A549 (cell line): ENCODE measurements at regions of chr14 and their contacts with region 1.

Region 1: GRCh38 chr14:23114669-23115491 is 4.2 kb downstream of the CEBPE start:
- DNase-seq: peak; percentile 79 to 80
- ATAC-seq: peak; percentile 80 to 88
- H3K4me3 ChIP-seq: no peak overlapping the region
- H3K27ac ChIP-seq: peak overlapping the region; percentile 47 to 75; a peak in 5 of 6 replicates
- H3K4me1 ChIP-seq: peaks cover 22% of the 10 kb centered on the region
- CTCF ChIP-seq: no peak
- EP300 ChIP-seq: no peak
- POLR2A ChIP-seq: no peak
- RAD21 ChIP-seq: no peak

Region 2: GRCh38 chr14:23020143-23021128 is 94.4 kb before region 1 on chr14:
- CTCF ChIA-PET with region 1: no interaction called
- POLR2A ChIA-PET with region 1: no interaction called
- DNase-seq: no peak
- ATAC-seq: peak in 1 of 2 experiments; percentile 26; a peak in 2 of 6 replicates
- H3K4me3 ChIP-seq: no peak overlapping the region
- H3K27ac ChIP-seq: no peak overlapping the region
- H3K4me1 ChIP-seq: no peaks in the 10 kb centered on the region
- CTCF ChIP-seq: no peak
- EP300 ChIP-seq: no peak
- POLR2A ChIP-seq: no peak
- RAD21 ChIP-seq: no peak

Region 3: DNA sequence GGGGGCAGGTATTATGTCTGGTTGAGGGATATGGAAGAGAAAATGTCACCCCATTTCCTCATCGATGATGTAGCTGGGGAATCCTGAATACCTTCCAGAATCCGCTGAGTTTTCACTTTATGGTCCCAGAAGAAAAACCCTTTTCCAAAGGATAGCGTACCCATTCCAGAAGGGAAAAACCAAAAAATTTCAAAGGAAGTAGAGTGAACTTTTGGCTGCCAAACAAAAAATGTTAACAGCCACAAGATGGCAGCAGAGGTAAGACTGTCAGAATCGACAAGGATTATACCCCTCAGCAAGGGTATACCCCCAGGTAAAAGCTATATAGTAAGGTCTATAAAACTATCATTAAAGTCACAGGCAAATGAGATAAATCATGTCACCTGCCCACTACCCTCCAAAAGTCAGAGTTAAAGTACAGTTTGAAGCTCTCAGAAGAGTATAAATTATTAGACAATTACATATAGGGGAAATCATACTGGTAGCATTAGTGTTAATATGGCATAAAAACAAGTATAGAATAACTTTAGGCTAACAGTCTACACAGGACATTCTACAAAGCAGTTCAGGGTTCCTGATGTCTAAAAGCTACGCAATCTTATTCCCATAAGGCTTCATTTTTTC is 38.0 kb before region 1 on chr14:
- CTCF ChIA-PET with region 1: interaction called, 126 read pairs
- POLR2A ChIA-PET with region 1: no interaction called
- DNase-seq: peak in 1 of 2 experiments; percentile 33
- ATAC-seq: peak; percentile 51 to 55; a peak in 3 of 6 replicates
- H3K4me3 ChIP-seq: no peak overlapping the region
- H3K27ac ChIP-seq: no peak overlapping the region; a peak in 1 of 6 replicates
- H3K4me1 ChIP-seq: peaks cover 49% of the 10 kb centered on the region
- CTCF ChIP-seq: peak; percentile 80
- EP300 ChIP-seq: no peak
- POLR2A ChIP-seq: no peak
- RAD21 ChIP-seq: peak; percentile 48 to 56; a peak in 4 of 5 replicates

Region 4: DNA sequence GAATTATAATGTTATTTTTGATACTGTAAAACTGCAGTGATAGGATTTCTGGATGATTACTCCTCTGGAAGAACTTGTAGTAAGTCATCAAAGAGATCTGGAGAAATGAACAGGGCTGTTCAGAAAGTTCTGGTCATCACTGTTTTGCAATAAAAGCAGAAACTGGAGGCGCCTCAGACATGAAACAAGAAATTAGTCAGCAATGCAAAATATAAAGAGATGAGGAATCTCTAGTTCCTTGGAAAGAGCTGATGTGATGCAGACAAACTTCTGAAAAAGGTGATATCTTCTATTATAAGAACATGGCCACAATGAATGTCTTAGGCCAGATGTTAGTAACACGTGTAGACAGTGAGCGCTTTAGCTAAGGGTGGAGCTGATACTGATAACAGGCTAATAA is 29.4 kb before region 1 on chr14:
- CTCF ChIA-PET with region 1: interaction called, 126 read pairs
- POLR2A ChIA-PET with region 1: no interaction called
- DNase-seq: no peak
- ATAC-seq: no peak
- H3K4me3 ChIP-seq: no peak overlapping the region
- H3K27ac ChIP-seq: no peak overlapping the region
- H3K4me1 ChIP-seq: peaks cover 4% of the 10 kb centered on the region; the same call in 2 of the 3 replicates
- CTCF ChIP-seq: no peak
- EP300 ChIP-seq: no peak
- POLR2A ChIP-seq: no peak
- RAD21 ChIP-seq: no peak